ENCODE measurements at regions of chr18 and their contacts with region 1.

Region 1: GRCh38 chr18:77132371-77133050 is at the start of gene MBP:
- DNase-seq: peak; percentile 92
- H3K4me3 Mint-ChIP-seq: peak within 1 kb of the TSS; percentile 100
- H3K27ac Mint-ChIP-seq: peak within 1 kb of the TSS; percentile 97
- H3K4me1 Mint-ChIP-seq: peaks cover 47% of the 10 kb centered on the region
- H3K27me3 Mint-ChIP-seq: no peaks in the 10 kb centered on the region
- total RNA-seq, gene MBP: 60.2 and 63.1 TPM in 2 replicates

Region 2: DNA sequence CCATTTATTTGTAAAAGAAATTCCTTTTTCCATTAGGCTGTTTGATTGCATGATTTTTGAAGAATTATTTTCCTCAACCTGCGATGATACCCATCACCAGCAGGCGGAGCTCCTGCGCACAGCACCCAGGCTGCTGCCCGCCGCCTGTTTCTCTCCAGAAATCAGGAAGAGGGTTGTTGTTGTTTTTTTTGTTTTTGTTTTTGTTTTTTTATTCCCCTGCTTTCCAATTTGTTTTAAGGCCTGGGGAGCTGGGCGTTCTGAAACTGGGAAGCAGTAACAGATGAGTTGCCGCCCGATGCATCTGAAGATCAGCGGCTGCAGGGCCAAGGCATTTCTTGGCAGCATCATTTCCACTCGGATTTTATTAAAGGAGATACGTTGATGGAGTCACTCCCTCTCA is 132.0 kb before region 1 on chr18:
- intact Hi-C with region 1: loop called (anchors 5 kb)
- DNase-seq: peak; percentile 83
- H3K4me3 Mint-ChIP-seq: no peak overlapping the region
- H3K27ac Mint-ChIP-seq: no peak overlapping the region
- H3K4me1 Mint-ChIP-seq: peaks cover 31% of the 10 kb centered on the region
- H3K27me3 Mint-ChIP-seq: peaks cover 4% of the 10 kb centered on the region

Measured in activated CD4-positive, alpha-beta T cell treated with anti-CD3 and anti-CD28 coated beads, Interleukin-2, amount 10 ng/mL, durations not matched to agents 24 days and 14 days (primary cell).